ENCODE measurements at regions of chr20 and their contacts with region 1.

Region 1: DNA sequence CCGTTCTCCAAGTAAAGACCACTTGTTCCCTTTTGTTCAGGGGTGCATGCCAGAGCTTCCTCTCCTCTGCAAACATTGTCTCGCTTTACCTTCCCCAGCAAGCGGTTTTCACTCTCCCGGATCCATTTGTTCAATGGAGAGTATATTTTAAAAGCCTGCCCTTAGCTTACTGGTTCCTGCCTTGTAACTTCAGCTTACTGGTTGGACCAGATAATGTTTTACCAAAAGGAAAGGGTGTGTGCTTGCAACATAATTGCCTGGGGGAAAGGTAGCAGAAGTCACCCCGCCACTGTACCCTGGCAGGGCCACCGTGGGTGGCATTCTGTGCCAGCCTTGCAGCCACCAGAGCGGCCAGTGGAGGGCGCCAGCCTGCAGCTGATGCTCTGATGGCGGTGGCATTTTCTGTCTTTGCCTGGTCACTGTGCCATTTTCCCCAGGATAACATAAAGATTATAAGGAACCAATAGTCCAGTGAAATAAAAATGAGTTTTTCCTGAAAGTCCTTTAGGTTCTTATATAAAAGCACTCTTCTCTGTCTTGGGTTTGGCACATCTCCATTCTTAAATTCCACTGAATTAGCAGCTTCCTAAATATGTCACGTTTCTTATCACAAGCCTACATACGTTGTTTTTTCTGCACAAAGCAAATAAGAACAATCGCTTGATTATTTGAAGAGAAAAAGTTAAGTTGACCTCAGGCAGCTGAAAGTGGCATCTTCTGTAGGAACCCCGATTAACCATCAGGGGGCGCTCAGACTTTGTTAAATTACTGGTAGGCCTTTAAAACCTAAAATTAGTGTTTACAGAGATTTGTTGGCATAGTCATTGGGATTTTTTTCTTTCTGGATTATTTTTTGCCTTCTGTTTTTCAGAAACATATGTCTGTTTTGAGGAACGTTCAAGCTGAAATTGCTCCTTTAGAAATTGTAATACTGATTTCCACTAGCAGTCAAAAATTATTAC is 67.4 kb upstream of the XRN2 start:
- DNase-seq: peak; percentile 86
- ATAC-seq: peak; percentile 79
- H3K4me3 ChIP-seq: peak overlapping the region; percentile 11; the same call in 1 of the 2 replicates
- H3K27ac ChIP-seq: peak overlapping the region; percentile 6; the same call in 1 of the 2 replicates
- H3K4me1 ChIP-seq: peaks cover 20% of the 10 kb centered on the region
- H3K27me3 ChIP-seq: no peaks in the 10 kb centered on the region
- CTCF ChIP-seq: peak; percentile 97

Region 2: GRCh38 chr20:21125849-21126580 is 109.8 kb before region 1 on chr20 and contains the start of gene KIZ:
- CTCF ChIA-PET with region 1: no interaction called
- POLR2A ChIA-PET with region 1: no interaction called
- intact Hi-C with region 1: loop called (anchors 5 kb)
- DNase-seq: peak; percentile 98
- ATAC-seq: peak; percentile 93
- H3K4me3 ChIP-seq: peak within 1 kb of the TSS; percentile 87
- H3K27ac ChIP-seq: no peak within 1 kb of the TSS
- H3K4me1 ChIP-seq: peaks cover 10% of the 10 kb centered on the region
- H3K27me3 ChIP-seq: no peaks in the 10 kb centered on the region
- CTCF ChIP-seq: no peak
- total RNA-seq, gene KIZ: 10.3 and 13.4 TPM in 2 replicates

Region 3: DNA sequence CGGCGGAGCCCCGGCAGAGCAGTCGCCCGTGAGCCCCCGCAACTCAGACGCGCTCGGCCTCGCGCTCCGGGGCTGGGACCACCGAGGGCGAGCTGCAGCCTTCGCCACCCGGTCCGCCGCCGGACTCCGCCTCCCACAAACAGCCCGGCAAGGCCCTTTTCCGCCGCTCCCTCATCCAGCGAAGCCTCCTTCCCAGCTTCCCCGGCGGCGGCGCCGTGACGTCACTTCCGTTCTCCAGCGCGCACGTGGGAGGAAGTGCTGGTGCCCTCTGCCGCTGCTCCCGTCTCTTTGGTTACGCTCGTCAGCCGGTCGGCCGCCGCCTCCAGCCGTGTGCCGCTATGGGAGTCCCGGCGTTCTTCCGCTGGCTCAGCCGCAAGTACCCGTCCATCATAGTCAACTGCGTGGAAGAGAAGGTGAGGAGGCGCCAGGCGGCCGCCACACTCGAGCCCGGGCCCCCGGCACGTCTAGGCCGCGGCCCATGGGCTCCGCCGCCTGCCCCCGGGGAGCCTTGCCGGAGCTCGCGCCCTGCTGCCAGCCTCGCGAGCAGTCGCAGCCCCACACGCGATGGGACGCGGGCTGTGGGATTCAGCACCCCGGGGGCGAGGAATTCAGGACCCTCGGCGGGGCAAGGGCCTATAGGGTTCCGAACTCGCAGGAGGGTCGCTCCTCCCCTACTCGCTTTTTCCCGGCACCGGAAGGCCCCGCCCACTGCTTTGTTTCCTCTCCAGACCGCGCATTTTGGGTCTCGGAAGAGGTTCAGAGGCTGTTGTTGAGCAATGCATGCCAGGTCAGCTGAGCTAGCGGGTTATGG is 67.5 kb after region 1 on chr20 and contains the start of gene XRN2:
- CTCF ChIA-PET with region 1: no interaction called
- POLR2A ChIA-PET with region 1: no interaction called
- intact Hi-C with region 1: loop called (anchors 5 kb)
- DNase-seq: peak; percentile 97
- ATAC-seq: peak; percentile 93
- H3K4me3 ChIP-seq: peak within 1 kb of the TSS; percentile 92
- H3K27ac ChIP-seq: peak within 1 kb of the TSS; percentile 74
- H3K4me1 ChIP-seq: peaks cover 16% of the 10 kb centered on the region
- H3K27me3 ChIP-seq: no peaks in the 10 kb centered on the region
- CTCF ChIP-seq: 0 out of 2 replicates have a peak, but pooled peaks have one; percentile 27
- total RNA-seq, gene XRN2: 71.5 and 76.8 TPM in 2 replicates

Region 4: GRCh38 chr20:21490095-21490494 is 254.3 kb after region 1 on chr20:
- CTCF ChIA-PET with region 1: interaction called, 8 read pairs
- POLR2A ChIA-PET with region 1: no interaction called
- intact Hi-C with region 1: loop called (anchors 1 kb)
- DNase-seq: peak; percentile 45
- ATAC-seq: no peak
- H3K4me3 ChIP-seq: no peak overlapping the region
- H3K27ac ChIP-seq: no peak overlapping the region
- H3K4me1 ChIP-seq: no peaks in the 10 kb centered on the region
- H3K27me3 ChIP-seq: peaks cover 70% of the 10 kb centered on the region
- CTCF ChIP-seq: peak; percentile 62

Region 5: DNA sequence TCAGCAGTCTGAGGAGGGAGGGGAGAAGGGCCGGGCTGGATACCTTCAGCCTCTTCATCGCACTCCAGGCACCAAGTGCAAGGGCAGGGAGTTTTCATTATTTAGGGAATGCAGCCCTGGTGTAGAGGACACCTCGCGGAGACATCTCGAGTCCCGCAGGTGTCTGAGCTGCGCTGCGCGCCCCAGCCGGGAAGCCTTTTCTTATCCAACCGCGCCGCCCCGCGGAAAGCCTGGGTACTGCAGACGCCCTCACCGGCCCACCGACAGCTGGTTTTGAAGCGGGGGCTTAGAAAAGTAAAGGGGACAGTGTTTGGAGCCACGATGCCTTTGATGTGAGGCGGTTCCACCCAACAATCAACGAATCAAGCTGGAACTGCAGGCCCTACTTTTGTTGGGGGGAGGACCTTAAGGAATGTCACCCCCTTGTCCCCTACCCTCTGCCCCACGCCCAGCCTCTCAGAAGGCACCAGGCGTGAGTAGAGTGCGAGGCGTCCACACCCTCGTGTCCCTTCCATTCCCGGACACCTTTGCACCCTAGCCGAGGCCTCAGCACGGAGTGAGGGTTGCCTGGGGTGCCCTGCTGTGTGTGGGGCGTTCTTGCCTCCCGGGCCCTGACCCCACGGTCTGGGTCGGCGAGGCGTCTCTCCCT is 269.5 kb after region 1 on chr20:
- CTCF ChIA-PET with region 1: interaction called, 18 read pairs
- POLR2A ChIA-PET with region 1: no interaction called
- intact Hi-C with region 1: loop called (anchors 1 kb)
- DNase-seq: peak; percentile 74
- ATAC-seq: peak; percentile 63
- H3K4me3 ChIP-seq: peak overlapping the region; percentile 55
- H3K27ac ChIP-seq: no peak overlapping the region
- H3K4me1 ChIP-seq: peaks cover 8% of the 10 kb centered on the region
- H3K27me3 ChIP-seq: peaks cover 38% of the 10 kb centered on the region
- CTCF ChIP-seq: peak; percentile 98

Region 6: GRCh38 chr20:21571841-21572690 is 336.3 kb after region 1 on chr20:
- CTCF ChIA-PET with region 1: no interaction called
- POLR2A ChIA-PET with region 1: no interaction called
- intact Hi-C with region 1: loop called (anchors 5 kb)
- DNase-seq: peak; percentile 34
- ATAC-seq: no peak; the same call in 1 of the 2 replicates
- H3K4me3 ChIP-seq: no peak overlapping the region
- H3K27ac ChIP-seq: no peak overlapping the region
- H3K4me1 ChIP-seq: no peaks in the 10 kb centered on the region
- H3K27me3 ChIP-seq: peaks cover 65% of the 10 kb centered on the region
- CTCF ChIP-seq: peak; percentile 95

Measured in PC-3 (cell line).